MCF 10A (cell line): ENCODE measurements at regions of chr12 and their contacts with region 1.

Region 1: GRCh38 chr12:116142936-116143898 is 134.3 kb downstream of the MED13L start:
- DNase-seq: peak; percentile 55
- H3K4me3 Mint-ChIP-seq: peak overlapping the region; percentile 27
- H3K27ac Mint-ChIP-seq: peak overlapping the region; percentile 86
- H3K4me1 Mint-ChIP-seq: peaks cover 50% of the 10 kb centered on the region
- H3K27me3 Mint-ChIP-seq: no peaks in the 10 kb centered on the region
- CTCF ChIP-seq: no peak

Region 2: DNA sequence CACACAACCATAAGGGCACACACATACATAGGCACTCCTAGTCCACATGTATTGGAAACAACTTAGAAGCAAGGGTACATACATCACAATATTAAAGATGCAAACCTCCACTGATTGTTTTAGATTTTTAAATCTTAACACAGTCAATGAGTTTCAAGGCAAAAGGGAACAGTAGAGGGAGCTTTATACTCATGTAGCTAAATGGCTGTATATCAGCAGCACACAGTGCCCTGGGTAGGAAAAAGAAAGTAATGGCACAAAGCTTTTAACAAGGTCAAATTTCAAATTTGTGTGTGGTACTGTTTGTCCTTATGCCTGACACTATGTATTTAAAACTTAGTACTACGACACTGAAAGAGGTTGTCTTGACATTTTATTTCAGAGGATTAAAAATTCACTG is 127.7 kb before region 1 on chr12:
- CTCF ChIA-PET with region 1: interaction called, 3 read pairs
- POLR2A ChIA-PET with region 1: no interaction called
- intact Hi-C with region 1: loop called (anchors 10 kb)
- DNase-seq: peak; percentile 43
- H3K4me3 Mint-ChIP-seq: no peak overlapping the region
- H3K27ac Mint-ChIP-seq: no peak overlapping the region
- H3K4me1 Mint-ChIP-seq: peaks cover 4% of the 10 kb centered on the region
- H3K27me3 Mint-ChIP-seq: no peaks in the 10 kb centered on the region
- CTCF ChIP-seq: peak; percentile 30

Region 3: DNA sequence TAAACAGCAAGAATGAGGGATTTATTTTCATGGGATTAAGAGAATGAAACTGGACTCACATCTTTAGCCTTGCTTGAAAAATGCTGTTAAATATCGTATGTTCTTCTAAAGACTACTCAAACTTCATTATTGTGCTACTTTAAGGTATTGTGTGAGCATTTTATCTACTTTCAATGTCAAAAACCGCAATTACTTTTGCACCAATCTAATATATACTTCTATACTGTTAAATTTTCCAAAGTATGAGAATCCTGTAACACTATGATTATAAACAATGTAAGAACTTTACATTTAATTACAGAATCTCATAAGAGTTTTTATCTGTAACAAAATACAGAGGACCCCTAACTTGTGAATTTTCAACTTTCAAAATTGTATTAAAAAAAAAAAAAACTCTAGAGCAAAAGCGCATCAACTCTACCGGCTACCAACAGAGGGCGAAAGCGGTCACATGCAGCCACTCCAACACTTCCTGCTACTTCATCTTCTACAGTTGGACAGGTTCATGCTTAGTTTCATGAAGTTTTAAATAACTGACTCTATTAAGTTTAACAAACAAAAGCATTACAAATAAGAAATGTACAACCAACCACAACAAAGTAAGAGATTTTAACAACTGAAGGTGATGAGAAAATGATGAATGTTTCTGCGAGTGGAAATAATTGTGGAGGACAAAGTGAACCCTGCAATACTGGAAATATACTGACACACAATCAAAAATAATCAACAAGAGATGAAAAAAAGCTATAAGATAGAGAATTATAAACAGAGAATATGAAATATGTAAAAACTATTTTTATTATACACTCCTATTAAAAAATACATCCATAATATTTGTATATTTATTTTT is 76.6 kb before region 1 on chr12:
- CTCF ChIA-PET with region 1: interaction called, 3 read pairs
- POLR2A ChIA-PET with region 1: no interaction called
- intact Hi-C with region 1: loop called (anchors 5 kb)
- DNase-seq: peak; percentile 55
- H3K4me3 Mint-ChIP-seq: no peak overlapping the region
- H3K27ac Mint-ChIP-seq: no peak overlapping the region
- H3K4me1 Mint-ChIP-seq: peaks cover 18% of the 10 kb centered on the region
- H3K27me3 Mint-ChIP-seq: no peaks in the 10 kb centered on the region
- CTCF ChIP-seq: peak; percentile 70

Region 4: GRCh38 chr12:116123451-116124258 is 19.6 kb before region 1 on chr12:
- CTCF ChIA-PET with region 1: interaction called, 3 read pairs
- POLR2A ChIA-PET with region 1: interaction called, 13 read pairs
- intact Hi-C with region 1: no loop called
- DNase-seq: peak; percentile 69
- H3K4me3 Mint-ChIP-seq: peak overlapping the region; percentile 52
- H3K27ac Mint-ChIP-seq: peak overlapping the region; percentile 7
- H3K4me1 Mint-ChIP-seq: peaks cover 42% of the 10 kb centered on the region
- H3K27me3 Mint-ChIP-seq: no peaks in the 10 kb centered on the region
- CTCF ChIP-seq: no peak

Region 5: DNA sequence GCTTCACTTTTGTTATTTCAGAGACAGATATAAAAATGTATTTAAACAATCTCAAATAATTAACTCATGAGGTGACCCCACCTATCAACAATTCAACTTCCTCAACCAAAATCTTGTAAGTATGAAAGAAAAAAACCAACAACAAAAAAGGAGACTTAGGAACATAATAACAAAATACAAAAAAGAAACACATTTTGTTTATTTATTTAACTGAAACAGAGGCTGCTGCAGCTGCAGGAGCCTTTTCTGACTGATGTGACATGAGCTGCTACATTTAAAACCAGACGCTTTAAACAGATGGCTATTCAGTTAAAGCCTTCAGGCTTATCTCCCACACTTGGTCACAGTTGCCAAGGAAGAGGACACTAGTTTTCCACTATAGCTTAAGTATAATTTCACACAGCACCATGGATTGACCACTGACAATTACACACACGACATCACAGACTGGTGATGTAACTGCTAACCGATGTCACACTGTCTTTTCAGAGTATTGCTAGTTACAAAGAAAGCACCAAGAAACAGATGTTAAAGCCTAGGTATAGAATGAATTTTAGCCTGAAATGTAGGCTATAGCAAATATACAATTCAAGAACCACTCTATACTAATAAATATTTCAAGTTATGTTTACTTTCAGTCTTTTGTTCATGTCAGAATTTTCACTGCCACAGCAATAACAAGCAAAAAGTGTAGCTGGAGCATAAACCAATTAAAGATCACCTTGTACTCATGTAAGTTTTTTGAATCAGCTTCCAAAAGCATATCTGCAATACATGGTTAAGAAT is 21.2 kb after region 1 on chr12:
- CTCF ChIA-PET with region 1: interaction called, 11 read pairs
- POLR2A ChIA-PET with region 1: interaction called, 5 read pairs
- intact Hi-C with region 1: no loop called
- DNase-seq: no peak
- H3K4me3 Mint-ChIP-seq: peak overlapping the region; percentile 66
- H3K27ac Mint-ChIP-seq: peak overlapping the region; percentile 71
- H3K4me1 Mint-ChIP-seq: peaks cover 36% of the 10 kb centered on the region
- H3K27me3 Mint-ChIP-seq: no peaks in the 10 kb centered on the region
- CTCF ChIP-seq: no peak

Region 6: DNA sequence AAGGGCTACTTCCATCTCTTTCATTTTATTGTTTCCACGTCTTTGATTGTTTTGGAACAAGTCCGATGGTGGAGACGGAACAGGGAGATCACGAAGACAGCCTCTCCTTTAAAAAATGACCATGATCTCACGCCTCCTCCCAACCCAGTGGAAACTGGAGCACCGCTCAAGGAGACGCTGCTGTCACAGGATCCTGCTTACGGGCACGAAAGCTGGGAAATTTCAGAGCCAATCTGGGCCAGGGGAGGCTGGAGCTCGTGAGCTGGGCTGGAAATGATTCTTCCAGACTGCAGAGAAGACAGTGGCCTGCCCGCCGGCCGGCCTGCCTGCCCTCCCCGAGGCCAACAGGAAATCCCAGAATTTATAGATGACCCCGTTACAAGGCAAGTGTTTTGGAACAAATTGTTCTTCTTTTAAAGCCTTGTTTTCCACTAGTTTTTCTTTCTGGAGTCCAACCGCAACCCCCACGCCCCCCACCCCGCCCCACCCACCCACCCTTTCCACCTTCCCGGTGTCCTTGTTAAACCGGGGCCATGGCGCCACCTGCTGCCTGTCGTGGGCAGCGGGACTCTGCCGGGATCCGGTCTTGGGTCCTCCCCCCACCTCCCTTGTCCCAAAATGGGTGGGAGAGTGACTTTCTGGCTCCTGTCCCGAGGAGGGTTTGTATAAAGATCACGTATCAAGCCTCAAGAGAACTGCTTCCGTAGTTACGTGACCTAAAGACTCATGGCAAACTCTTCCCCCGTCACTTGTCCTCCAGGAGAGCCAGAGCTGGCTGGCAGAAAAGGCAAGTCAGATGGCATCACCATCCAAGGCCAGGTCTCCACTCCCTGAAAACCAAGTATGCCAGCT is 456.3 kb after region 1 on chr12:
- CTCF ChIA-PET with region 1: interaction called, 7 read pairs
- POLR2A ChIA-PET with region 1: no interaction called
- intact Hi-C with region 1: loop called (anchors 2 kb)
- DNase-seq: peak; percentile 57
- H3K4me3 Mint-ChIP-seq: no peak overlapping the region
- H3K27ac Mint-ChIP-seq: no peak overlapping the region
- H3K4me1 Mint-ChIP-seq: no peaks in the 10 kb centered on the region
- H3K27me3 Mint-ChIP-seq: no peaks in the 10 kb centered on the region
- CTCF ChIP-seq: peak; percentile 71

Region 7: DNA sequence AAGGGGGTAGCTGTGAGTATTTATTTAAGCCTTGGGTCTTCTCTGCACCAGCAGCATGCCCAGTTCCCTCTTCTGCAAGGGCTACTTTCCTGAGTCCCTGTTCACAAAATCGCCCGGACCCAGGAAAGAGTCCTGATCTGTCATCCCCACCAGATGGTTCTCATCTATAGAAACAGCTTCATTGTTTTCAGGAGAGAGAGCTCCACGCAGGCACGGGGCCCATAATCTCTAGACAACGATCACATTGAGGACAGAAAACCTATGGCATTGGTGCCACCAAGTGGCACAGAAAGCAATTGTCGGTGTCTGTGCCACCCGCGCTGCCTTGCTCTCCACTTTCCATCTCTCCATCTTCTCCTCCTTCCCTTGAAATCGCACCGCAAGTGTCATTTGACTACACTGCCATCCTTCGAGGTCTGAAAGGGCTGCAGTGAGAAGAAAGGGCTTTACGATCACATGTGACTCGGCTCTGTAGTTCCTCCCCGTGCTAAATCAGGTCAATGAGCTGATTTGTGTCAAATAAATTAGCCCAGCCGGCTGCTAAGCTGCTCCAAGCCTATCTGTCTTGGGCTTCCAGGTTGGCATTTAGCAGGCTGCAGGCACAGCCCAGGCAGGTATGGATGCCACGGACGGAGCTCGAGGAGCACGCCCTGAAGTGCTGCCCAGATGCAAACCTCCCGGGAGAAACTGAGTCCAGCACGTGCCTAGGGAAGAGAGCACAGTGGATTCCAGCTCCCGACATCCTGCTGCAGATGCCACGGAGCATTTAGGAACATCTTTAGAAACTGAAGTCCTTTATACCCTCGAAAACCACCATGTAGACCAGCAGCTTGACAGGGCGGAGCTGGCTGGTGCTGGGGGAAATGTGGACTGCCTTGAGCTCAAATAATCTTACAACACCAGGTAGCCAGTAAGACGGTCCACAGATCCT is 565.9 kb after region 1 on chr12:
- CTCF ChIA-PET with region 1: interaction called, 4 read pairs
- POLR2A ChIA-PET with region 1: no interaction called
- intact Hi-C with region 1: loop called (anchors 5 kb)
- DNase-seq: peak; percentile 61
- H3K4me3 Mint-ChIP-seq: no peak overlapping the region
- H3K27ac Mint-ChIP-seq: no peak overlapping the region
- H3K4me1 Mint-ChIP-seq: peaks cover 9% of the 10 kb centered on the region
- H3K27me3 Mint-ChIP-seq: no peaks in the 10 kb centered on the region
- CTCF ChIP-seq: peak; percentile 71